Ovary (tissue), 10 donors: ENCODE measurements at regions of chr13 and their contacts with region 1.

Region 1: GRCh38 chr13:74133657-74134201 is 475 bp downstream of the KLF12 start:
- DNase-seq: peak; percentile 90 to 94 (median 91)
- H3K4me3 ChIP-seq: peak overlapping the region; percentile 77
- H3K27ac ChIP-seq: peak overlapping the region; percentile 63 to 94
- H3K4me1 ChIP-seq: peaks cover 9% of the 10 kb centered on the region
- H3K27me3 ChIP-seq: no peaks in the 10 kb centered on the region
- CTCF ChIP-seq: no peak
- EP300 ChIP-seq: no peak
- POLR2A ChIP-seq: peak; percentile 66

Region 2: DNA sequence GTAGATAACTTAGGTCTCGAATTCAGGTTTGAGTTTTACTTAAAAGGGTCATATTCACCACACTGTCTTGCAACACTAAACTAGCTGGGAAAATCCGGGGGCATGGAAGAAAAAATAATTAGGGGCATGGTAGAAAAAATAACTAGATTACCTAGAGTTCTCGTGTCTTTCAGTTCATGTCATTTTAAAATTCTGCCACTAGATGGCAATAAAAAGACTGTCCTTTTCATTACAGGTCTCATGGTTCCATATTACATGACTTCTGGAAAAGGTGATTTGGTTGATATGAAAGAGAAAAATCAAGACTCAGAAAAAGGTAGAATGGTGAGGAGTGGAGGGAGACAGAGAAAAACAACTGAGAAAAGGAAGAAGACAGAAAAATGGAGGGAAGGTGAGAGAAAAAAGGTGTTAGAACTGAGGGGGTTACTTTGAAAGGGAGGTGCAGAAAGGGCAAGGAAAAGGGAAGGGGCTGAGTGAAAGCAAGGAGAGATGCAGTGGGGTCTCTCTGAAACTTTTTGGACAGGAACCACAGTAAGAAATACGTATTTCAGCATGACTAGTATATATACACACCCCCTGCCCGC is 298.5 kb before region 1 on chr13:
- intact Hi-C with region 1: loop called in 1 of 4 experiments (anchors 10 kb)
- DNase-seq: no peak
- H3K4me3 ChIP-seq: no peak overlapping the region
- H3K27ac ChIP-seq: no peak overlapping the region
- H3K4me1 ChIP-seq: no peaks in the 10 kb centered on the region
- H3K27me3 ChIP-seq: no peaks in the 10 kb centered on the region
- CTCF ChIP-seq: peak; percentile 45 to 58 (median 53)
- EP300 ChIP-seq: no peak
- POLR2A ChIP-seq: no peak

Region 3: GRCh38 chr13:74573654-74574053 is 439.9 kb after region 1 on chr13:
- intact Hi-C with region 1: no loop called
- DNase-seq: peak in 1 of 5 donors; percentile 11
- H3K4me3 ChIP-seq: no peak overlapping the region
- H3K27ac ChIP-seq: no peak overlapping the region
- H3K4me1 ChIP-seq: peaks cover 4% of the 10 kb centered on the region
- H3K27me3 ChIP-seq: no peaks in the 10 kb centered on the region
- CTCF ChIP-seq: no peak
- EP300 ChIP-seq: no peak
- POLR2A ChIP-seq: no peak